ENCODE measurements at regions of chr5 and their contacts with region 1.

Region 1: GRCh38 chr5:132369474-132370180 is at the start of gene SLC22A5:
- DNase-seq: peak; percentile 75 to 85
- ATAC-seq: peak; percentile 77 to 88 (median 81)
- H3K4me3 ChIP-seq: peak within 1 kb of the TSS; percentile 89
- H3K27ac ChIP-seq: peak within 1 kb of the TSS; percentile 97
- H3K4me1 ChIP-seq: peaks cover 32% of the 10 kb centered on the region
- H3K27me3 ChIP-seq: no peaks in the 10 kb centered on the region
- CTCF ChIP-seq: no peak
- total RNA-seq, gene SLC22A5: 26.6 to 145 (median 74.7) TPM

Region 2: DNA sequence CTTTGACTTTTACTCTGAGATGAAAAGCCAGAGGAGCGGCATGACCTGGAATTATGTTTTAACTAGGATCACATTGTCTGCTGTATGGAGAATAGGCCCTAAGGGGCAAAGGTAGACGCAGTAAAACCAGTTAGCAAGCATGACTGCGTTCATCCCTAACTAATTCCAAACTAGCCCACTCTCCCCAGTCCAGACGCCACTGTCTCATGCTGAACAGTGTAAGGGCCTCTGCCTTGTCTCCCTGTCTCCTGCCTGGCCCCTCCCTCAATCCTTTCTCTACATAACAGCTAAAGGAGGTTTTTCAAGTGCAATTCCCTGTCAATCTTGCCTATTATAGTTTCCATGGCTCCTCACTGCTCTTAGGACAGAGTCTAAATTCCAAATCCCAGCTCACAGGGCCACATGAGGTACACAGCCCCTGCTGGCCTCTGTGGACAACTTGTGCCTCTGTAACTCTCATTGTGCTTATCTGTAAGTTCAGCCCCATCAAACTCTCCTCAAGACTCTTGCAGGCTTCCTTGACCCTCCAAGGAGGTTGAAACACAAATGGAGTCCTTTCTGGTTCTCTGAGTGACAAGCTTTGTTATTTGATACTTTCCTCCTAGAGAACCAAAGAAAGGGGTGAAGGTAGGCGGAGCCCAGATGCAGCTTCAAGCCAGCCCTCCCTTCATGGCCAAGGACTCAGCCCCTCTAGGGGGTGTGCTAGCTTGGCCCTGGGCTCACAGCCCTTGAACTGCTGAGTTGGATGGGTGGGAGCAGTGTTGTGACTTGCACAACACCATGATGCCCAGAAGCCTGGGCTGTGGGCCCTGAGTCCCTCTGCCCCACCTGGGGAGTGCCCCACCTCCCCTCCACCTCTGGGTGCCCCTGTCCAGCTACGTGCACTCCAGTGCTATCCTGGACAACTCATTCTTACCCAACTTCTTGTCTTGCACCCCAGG is 91.4 kb before region 1 on chr5:
- intact Hi-C with region 1: loop called in 1 of 2 experiments (anchors 5 kb)
- DNase-seq: no peak
- ATAC-seq: no peak
- H3K4me3 ChIP-seq: no peak overlapping the region
- H3K27ac ChIP-seq: no peak overlapping the region
- H3K4me1 ChIP-seq: no peaks in the 10 kb centered on the region
- H3K27me3 ChIP-seq: no peaks in the 10 kb centered on the region
- CTCF ChIP-seq: no peak

Region 3: GRCh38 chr5:132293066-132293991 is 76.3 kb before region 1 on chr5:
- intact Hi-C with region 1: loop called (anchors 2 to 5 kb)
- DNase-seq: peak; percentile 92 to 93
- ATAC-seq: peak; percentile 70 to 81 (median 72)
- H3K4me3 ChIP-seq: peak overlapping the region; percentile 73
- H3K27ac ChIP-seq: peak overlapping the region; percentile 96
- H3K4me1 ChIP-seq: peaks cover 30% of the 10 kb centered on the region
- H3K27me3 ChIP-seq: peaks cover 0 to 2% (median 0%) of the 10 kb centered on the region in 3 donors
- CTCF ChIP-seq: peak; percentile 24

Region 4: GRCh38 chr5:132322266-132322665 is 47.4 kb before region 1 on chr5:
- intact Hi-C with region 1: no loop called
- DNase-seq: no peak
- ATAC-seq: no peak
- H3K4me3 ChIP-seq: no peak overlapping the region
- H3K27ac ChIP-seq: no peak overlapping the region
- H3K4me1 ChIP-seq: peaks cover 32% of the 10 kb centered on the region
- H3K27me3 ChIP-seq: no peaks in the 10 kb centered on the region
- CTCF ChIP-seq: no peak

Region 5: GRCh38 chr5:132334812-132335211 is 34.8 kb before region 1 on chr5:
- intact Hi-C with region 1: no loop called
- DNase-seq: no peak
- ATAC-seq: peak in 3 of 4 donors; percentile 32 to 53 (median 34)
- H3K4me3 ChIP-seq: no peak overlapping the region
- H3K27ac ChIP-seq: no peak overlapping the region
- H3K4me1 ChIP-seq: no peaks in the 10 kb centered on the region
- H3K27me3 ChIP-seq: no peaks in the 10 kb centered on the region
- CTCF ChIP-seq: no peak

Region 6: DNA sequence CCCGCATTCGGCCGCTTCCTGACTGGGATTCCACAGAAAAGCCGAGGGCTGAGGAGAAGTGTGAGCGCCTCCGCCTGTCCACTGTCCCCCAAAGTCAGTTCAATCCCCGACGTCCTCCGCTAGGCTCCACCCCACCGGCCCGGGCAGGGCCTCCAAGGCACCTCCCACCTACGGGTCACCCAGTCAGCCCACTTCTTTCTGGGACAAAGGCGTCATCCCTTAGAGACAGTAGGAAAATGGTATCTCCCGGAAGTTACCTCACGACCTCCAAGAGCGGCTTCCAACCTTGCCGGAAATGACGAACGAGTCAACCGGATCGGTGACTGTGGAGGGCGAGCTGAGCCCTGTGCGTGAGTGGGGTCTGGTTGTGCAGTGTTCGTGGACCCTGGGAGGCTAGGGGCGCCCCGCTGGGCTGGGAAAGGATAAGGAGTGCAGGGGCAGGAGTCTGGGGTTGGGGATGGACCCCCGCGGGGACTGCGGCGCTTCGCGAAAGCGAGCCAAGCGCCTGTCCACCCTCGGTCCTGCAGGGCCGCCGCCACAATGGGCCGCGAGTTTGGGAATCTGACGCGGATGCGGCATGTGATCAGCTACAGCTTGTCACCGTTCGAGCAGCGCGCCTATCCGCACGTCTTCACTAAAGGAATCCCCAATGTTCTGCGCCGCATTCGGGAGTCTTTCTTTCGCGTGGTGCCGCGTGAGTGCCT is 496.9 kb after region 1 on chr5 and contains the starts of genes GDF9 and UQCRQ:
- intact Hi-C with region 1: loop called in 1 of 2 experiments (anchors 10 kb)
- DNase-seq: peak; percentile 95 to 97
- ATAC-seq: peak; percentile 97 to 99 (median 98)
- H3K4me3 ChIP-seq: peak within 1 kb of the TSS; percentile 99
- H3K27ac ChIP-seq: peak within 1 kb of the TSS; percentile 97
- H3K4me1 ChIP-seq: peaks cover 30% of the 10 kb centered on the region
- H3K27me3 ChIP-seq: no peaks in the 10 kb centered on the region
- CTCF ChIP-seq: peak; percentile 12
- total RNA-seq, gene GDF9: 0.57 to 1.2 (median 0.78) TPM
- total RNA-seq, gene UQCRQ: 696 to 985 (median 915) TPM

Measured in psoas muscle (tissue), 8 donors.